ENCODE measurements at regions of chr17 and their contacts with region 1.

Region 1: DNA sequence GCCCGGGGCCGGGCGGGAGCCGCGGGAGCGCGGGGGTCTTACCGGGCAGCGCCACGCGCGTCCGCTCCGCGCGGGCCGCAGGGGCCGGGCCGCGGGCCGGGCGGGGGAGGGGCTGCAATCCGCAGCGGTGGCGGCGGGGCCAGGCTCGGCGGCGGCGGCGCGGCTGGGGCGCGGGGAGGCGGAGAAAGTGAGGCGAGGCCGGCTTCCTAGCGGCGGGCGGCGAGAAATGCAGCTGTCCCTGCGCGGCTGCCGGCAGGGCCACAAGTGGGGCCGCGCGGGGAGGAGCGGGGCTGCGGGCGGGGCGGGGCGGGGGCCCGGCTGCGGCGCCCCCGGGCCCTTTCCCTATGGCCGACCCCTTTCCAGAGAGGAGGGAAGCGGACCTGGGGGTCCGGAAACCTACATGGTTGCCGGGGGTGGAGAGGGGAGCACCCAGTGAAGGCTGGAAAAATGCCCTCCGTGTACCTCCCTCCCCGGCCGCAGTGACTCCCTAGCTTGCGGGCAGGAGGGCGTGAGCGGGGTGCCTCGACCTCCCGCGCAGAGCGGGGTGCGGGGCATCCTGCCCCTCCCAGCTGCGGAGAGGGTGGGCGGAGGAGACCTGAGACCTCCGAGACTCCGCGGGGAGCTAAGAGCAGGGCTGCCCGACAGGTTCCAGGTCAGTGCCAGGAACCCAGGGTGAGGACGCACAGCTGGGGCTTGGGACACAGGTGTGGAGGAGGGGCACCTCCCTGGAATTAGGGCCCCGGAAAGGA is at the start of gene CUEDC1:
- DNase-seq: no peak
- H3K4me3 ChIP-seq: peak within 1 kb of the TSS; percentile 70
- CTCF ChIP-seq: peak; percentile 68

Region 2: GRCh38 chr17:57868007-57868909 is 87.1 kb before region 1 on chr17:
- CTCF ChIA-PET with region 1: interaction called, 56 read pairs
- POLR2A ChIA-PET with region 1: interaction called, 11 read pairs
- DNase-seq: peak; percentile 44
- H3K4me3 ChIP-seq: no peak overlapping the region; the same call in 1 of the 2 replicates
- CTCF ChIP-seq: peak; percentile 64

Region 3: DNA sequence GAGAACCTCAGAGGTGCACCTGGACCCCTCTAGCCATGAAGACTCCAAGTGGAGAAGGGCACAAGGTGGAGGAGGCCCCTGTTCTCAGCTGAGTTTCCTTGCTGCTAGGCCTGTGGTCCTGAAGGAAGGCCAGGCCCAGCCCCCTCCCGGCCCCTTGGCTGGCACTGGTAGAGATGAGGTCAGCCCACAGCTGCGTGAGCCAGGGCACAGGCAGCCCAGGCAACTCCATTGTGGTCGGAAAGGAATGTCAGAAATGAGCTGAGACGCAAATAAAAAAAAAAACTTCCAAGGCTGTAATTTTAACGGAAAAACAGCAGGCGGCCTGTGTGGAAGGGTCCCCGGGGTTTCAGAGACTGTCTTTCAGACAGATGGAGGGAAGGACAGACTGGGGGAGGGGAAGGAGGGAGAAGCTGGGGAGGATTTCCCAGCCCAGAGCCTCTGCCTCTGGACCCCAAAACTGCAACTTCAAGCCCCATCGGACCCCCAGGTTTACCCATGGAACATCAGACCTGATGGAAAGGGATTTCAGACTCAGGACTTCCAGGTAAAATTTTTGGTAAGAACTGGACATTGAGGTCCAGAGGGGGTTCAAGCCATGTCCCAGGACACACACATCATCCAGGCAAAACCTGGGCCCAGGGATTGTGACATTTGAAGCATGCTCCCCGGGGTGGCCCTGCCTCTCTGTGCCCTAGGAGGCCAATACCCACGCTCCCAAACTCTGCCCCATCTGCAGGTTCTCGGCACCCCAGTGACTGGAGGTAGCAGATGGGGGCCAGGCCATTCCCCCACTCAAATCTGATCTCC is 79.8 kb before region 1 on chr17:
- CTCF ChIA-PET with region 1: interaction called, 56 read pairs
- POLR2A ChIA-PET with region 1: interaction called, 11 read pairs
- DNase-seq: peak; percentile 94
- H3K4me3 ChIP-seq: peak overlapping the region; percentile 31
- CTCF ChIP-seq: peak; percentile 60

Region 4: GRCh38 chr17:57970706-57971105 is 15.3 kb after region 1 on chr17:
- CTCF ChIA-PET with region 1: interaction called, 75 read pairs
- POLR2A ChIA-PET with region 1: interaction called, 4 read pairs
- DNase-seq: no peak
- H3K4me3 ChIP-seq: no peak overlapping the region
- CTCF ChIP-seq: no peak